ENCODE measurements at regions of chr7 and their contacts with region 1.

Region 1: GRCh38 chr7:75914730-75915585 is at the start of gene POR:
- DNase-seq: peak; percentile 99
- total RNA-seq, gene POR: 39.7 TPM

Region 2: DNA sequence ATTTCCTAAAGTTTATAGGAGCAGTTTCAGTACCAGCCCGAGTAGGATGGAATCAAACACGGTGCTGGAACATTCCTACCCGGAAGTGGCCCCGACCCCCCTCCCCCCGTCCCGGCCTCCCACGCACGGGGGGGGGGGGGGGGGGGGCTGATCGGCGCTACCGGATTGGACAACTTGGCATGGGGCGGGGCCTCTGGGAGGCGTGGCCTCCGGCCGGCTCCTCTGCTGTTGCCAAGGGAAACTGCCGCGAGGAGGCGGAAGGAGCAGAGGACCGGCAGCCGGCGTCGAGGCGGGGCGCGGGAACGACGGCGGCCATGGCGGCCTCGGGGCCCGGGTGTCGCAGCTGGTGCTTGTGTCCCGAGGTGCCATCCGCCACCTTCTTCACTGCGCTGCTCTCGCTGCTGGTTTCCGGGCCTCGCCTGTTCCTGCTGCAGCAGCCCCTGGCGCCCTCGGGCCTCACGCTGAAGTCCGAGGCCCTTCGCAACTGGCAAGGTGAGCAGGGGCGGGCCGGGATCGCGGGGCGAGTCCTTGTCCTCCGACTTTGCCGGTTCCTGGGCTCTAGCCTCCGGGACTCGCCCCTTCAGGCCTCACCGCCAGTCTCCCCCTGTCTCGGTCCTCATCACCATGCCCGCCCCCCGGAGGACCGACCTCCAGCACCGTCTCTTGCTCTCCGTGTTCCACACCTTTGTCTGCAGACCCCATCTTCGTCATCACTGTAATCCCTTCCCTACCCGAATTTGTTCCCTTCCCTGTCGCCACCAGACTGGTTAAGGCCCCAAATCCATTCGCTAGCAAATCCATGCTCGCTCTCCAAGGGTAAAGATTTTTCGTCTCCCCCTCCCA is 36.0 kb before region 1 on chr7 and contains the start of gene RHBDD2:
- intact Hi-C with region 1: loop called (anchors 2 kb)
- DNase-seq: peak; percentile 98
- total RNA-seq, gene RHBDD2: 33.6 TPM

Measured in cardiac septum (tissue), 1 donor.